ENCODE measurements at regions of chr7 and their contacts with region 1.

Region 1: GRCh38 chr7:74449809-74450397 is 3.8 kb upstream of the GTF2IRD1 start:
- DNase-seq: peak; percentile 68 to 78
- H3K4me3 ChIP-seq: no peak overlapping the region
- H3K27ac ChIP-seq: no peak overlapping the region
- H3K4me1 ChIP-seq: peaks cover 6 to 27% (median 23%) of the 10 kb centered on the region in 4 donors
- H3K27me3 ChIP-seq: peaks cover 0 to 17% (median 0%) of the 10 kb centered on the region in 3 donors
- CTCF ChIP-seq: peak in 5 of 7 experiments; percentile 61 to 85 (median 77)
- EP300 ChIP-seq: no peak
- POLR2A ChIP-seq: no peak

Region 2: GRCh38 chr7:74535951-74536356 is 86.1 kb after region 1 on chr7:
- intact Hi-C with region 1: loop called (anchors 10 kb)
- DNase-seq: peak in 1 of 2 donors; percentile 40
- H3K4me3 ChIP-seq: no peak overlapping the region
- H3K27ac ChIP-seq: peak overlapping the region in 4 of 5 donors; percentile 9 to 59 (median 47)
- H3K4me1 ChIP-seq: peaks cover 0 to 17% (median 11%) of the 10 kb centered on the region in 4 donors
- H3K27me3 ChIP-seq: no peaks in the 10 kb centered on the region
- CTCF ChIP-seq: no peak
- EP300 ChIP-seq: no peak
- POLR2A ChIP-seq: no peak